ENCODE measurements at regions of chr5 and their contacts with region 1.

Region 1: DNA sequence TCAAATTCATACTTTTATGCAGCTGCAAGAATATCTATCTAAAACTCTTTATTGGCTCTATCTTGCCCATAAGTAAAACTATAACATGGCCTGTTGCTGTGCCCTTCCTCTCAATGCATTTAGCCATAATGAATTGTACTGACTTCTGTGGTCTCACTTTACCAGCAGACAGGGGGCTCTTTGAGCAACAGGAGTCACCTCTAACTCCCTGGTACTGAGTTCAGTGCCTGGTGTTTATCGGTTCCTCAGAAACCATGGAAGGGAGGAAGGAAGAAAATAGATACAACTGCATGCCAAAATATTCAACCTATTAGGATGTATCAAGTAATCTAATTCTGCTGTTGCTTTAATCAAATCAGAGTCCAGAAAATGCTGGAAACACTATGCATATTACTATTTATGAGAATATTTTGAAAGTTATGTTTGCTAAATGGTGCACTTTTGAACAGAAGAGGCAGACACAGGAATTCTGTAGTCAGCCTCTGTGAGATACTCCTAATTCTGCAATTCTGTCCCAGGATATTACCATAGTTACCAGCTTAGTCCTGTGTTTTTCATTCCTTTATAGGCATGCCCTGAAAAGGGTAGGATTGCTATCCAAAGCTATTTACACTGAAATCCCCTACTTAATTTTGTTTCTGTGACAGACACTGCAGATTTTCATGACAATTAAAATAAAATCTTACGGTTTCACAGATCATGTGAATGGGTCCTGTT is 89.8 kb downstream of the CD180 start:
- DNase-seq: no peak
- H3K4me3 ChIP-seq: no peak overlapping the region
- H3K27ac ChIP-seq: no peak overlapping the region
- H3K4me1 ChIP-seq: no peaks in the 10 kb centered on the region
- H3K27me3 ChIP-seq: no peaks in the 10 kb centered on the region
- CTCF ChIP-seq: no peak

Region 2: GRCh38 chr5:67149951-67150523 is 43.3 kb after region 1 on chr5:
- CTCF ChIA-PET with region 1: no interaction called
- dilution Hi-C with region 1: no loop called
- in situ Hi-C with region 1: no loop called
- intact Hi-C with region 1: loop called (anchors 5 kb)
- DNase-seq: no peak
- H3K4me3 ChIP-seq: no peak overlapping the region
- H3K27ac ChIP-seq: no peak overlapping the region
- H3K4me1 ChIP-seq: no peaks in the 10 kb centered on the region
- H3K27me3 ChIP-seq: no peaks in the 10 kb centered on the region
- CTCF ChIP-seq: no peak

Region 3: DNA sequence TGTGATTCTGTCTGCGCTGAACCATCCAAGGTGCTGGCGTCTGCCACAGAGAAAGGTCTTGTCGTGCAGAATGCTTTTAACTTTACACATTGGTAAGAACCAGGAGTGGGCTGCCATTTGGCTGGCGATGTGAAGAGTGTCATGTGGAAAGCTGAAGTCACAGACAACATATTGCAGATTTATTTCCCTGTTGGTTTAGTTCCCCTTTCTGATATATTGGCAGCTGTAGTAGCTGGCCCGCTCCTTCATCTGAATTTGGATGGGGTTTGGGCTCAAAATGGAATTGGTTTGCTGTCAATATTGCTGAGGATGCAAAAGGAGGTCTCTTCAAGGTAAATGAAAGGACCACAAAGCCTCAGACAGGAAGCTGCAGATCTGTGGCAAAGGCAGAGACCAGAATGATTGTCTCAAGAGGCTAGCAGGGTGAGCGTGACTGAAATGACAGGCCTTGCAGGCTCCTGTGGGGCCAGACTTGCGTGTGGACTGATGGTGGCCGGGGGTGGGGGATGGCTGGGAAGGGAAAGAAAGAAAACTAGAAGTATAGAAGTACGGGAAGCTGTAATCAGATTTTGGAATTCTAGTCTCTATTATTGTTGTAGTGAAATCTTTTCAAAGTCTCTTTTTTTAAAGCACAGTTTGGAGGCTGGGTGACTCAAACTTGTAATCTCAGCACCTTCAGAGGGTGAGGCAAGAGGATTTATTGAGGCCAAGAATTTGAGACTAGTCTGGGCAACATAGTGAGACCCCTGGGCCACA is 114.9 kb after region 1 on chr5:
- CTCF ChIA-PET with region 1: no interaction called
- dilution Hi-C with region 1: no loop called
- in situ Hi-C with region 1: no loop called
- intact Hi-C with region 1: no loop called
- DNase-seq: no peak
- H3K4me3 ChIP-seq: no peak overlapping the region
- H3K27ac ChIP-seq: no peak overlapping the region
- H3K4me1 ChIP-seq: no peaks in the 10 kb centered on the region
- H3K27me3 ChIP-seq: no peaks in the 10 kb centered on the region
- CTCF ChIP-seq: no peak